Panc1 (cell line): ENCODE measurements at regions of chr13 and their contacts with region 1.

Region 1: GRCh38 chr13:50026788-50027473 is 11.7 kb downstream of the KCNRG start:
- DNase-seq: no peak
- ATAC-seq: no peak
- H3K4me3 ChIP-seq: no peak overlapping the region
- H3K27ac ChIP-seq: no peak overlapping the region
- H3K4me1 ChIP-seq: no peaks in the 10 kb centered on the region
- H3K27me3 ChIP-seq: no peaks in the 10 kb centered on the region
- CTCF ChIP-seq: no peak

Region 2: GRCh38 chr13:49985129-49985528 is 41.8 kb before region 1 on chr13:
- CTCF ChIA-PET with region 1: no interaction called
- POLR2A ChIA-PET with region 1: no interaction called
- in situ Hi-C with region 1: no loop called
- intact Hi-C with region 1: no loop called
- DNase-seq: no peak
- ATAC-seq: no peak
- H3K4me3 ChIP-seq: no peak overlapping the region
- H3K27ac ChIP-seq: no peak overlapping the region
- H3K4me1 ChIP-seq: no peaks in the 10 kb centered on the region
- H3K27me3 ChIP-seq: no peaks in the 10 kb centered on the region
- CTCF ChIP-seq: no peak

Region 3: GRCh38 chr13:50055454-50055853 is 28.5 kb after region 1 on chr13:
- CTCF ChIA-PET with region 1: no interaction called
- POLR2A ChIA-PET with region 1: interaction called, 13 read pairs
- in situ Hi-C with region 1: no loop called
- intact Hi-C with region 1: no loop called
- DNase-seq: no peak
- ATAC-seq: no peak
- H3K4me3 ChIP-seq: no peak overlapping the region
- H3K27ac ChIP-seq: no peak overlapping the region
- H3K4me1 ChIP-seq: no peaks in the 10 kb centered on the region
- H3K27me3 ChIP-seq: no peaks in the 10 kb centered on the region
- CTCF ChIP-seq: no peak

Region 4: DNA sequence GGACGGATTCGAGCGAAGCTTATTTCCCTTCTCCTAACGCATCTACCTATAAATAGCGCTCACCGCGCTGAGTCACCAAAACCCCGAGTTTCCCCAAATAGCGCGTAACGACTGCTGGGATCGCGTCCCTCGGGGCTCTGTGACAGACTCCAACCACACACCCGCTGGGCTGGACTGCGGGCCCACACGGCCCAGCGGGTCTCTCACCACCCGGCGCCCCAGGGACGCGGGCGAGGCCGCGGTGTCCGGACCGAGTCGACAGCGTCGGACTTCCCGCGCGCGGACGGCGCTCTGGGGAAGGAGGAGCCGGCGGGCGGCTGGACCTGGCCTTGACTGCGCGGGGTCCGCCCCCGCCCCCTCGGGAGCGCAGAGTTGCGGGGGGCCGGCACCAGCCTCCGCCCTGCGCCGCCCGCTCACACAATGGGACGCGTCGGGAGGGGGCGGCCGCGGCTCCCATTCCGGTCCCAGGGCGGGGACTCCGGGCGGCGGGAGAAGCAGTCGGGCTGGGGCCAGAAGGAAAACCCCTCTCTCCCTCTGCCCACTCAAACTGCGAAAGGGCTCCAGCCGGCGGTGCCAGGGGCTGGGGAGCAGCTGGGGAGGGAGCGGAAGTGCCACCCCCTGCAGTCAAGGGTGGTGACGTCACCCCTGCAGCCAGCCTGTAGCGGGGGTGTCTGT is 97.1 kb after region 1 on chr13:
- CTCF ChIA-PET with region 1: no interaction called
- POLR2A ChIA-PET with region 1: no interaction called
- in situ Hi-C with region 1: no loop called
- intact Hi-C with region 1: no loop called
- DNase-seq: no peak
- ATAC-seq: peak; percentile 90
- H3K4me3 ChIP-seq: peak overlapping the region; percentile 74 to 81
- H3K27ac ChIP-seq: peak overlapping the region; percentile 97
- H3K4me1 ChIP-seq: peaks cover 33% of the 10 kb centered on the region
- H3K27me3 ChIP-seq: no peaks in the 10 kb centered on the region
- CTCF ChIP-seq: no peak; the same call in 1 of the 2 replicates

Region 5: DNA sequence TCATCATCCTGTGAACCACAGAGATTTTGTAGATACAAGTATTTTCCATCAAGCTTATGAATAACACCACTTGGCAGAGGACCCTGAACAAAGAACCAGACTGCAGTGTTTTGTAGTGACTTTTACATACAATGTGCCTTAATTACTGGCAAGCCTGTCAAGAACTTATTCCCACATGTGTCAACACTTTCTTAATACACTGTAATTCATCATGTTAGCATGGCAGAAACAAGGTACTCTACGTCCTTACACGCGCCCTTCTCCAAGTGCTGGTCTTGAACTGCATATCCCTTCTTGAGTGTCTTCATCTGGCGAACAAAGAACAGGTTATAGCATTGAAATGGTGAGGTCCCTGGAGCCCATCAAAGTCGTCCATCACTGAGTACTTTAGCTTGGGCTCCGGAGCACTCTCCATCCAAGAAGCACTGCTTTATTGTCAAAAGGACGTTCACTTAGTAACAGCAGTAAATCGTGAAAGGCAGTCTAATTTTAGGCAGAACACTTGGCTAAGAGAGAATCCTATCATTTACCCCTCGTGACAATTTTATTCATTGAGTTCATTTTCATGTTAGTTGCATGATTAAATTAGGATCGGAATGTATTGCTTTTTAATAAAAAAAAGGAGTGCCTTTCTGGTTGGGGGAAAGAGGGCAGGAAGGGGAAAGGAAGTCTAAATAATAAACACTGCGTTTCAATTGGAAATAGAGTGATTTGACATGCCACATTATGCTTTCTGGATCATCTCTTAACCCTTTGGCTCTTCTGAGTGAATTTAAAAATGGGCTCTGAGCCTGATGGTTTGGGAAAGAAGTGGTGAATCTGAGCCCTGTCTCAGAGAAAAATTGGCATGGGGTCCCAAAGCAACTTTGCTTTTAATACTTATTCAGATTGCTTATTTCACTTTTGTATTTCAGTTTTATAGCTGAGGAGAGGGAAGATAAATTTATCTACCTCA is 440.5 kb after region 1 on chr13:
- CTCF ChIA-PET with region 1: no interaction called
- POLR2A ChIA-PET with region 1: no interaction called
- in situ Hi-C with region 1: no loop called
- intact Hi-C with region 1: no loop called
- DNase-seq: no peak
- ATAC-seq: no peak
- H3K4me3 ChIP-seq: no peak overlapping the region
- H3K27ac ChIP-seq: no peak overlapping the region
- H3K4me1 ChIP-seq: no peaks in the 10 kb centered on the region
- H3K27me3 ChIP-seq: no peaks in the 10 kb centered on the region
- CTCF ChIP-seq: no peak